GM10248 (cell line): ENCODE measurements at regions of chr7 and their contacts with region 1.

Region 1: DNA sequence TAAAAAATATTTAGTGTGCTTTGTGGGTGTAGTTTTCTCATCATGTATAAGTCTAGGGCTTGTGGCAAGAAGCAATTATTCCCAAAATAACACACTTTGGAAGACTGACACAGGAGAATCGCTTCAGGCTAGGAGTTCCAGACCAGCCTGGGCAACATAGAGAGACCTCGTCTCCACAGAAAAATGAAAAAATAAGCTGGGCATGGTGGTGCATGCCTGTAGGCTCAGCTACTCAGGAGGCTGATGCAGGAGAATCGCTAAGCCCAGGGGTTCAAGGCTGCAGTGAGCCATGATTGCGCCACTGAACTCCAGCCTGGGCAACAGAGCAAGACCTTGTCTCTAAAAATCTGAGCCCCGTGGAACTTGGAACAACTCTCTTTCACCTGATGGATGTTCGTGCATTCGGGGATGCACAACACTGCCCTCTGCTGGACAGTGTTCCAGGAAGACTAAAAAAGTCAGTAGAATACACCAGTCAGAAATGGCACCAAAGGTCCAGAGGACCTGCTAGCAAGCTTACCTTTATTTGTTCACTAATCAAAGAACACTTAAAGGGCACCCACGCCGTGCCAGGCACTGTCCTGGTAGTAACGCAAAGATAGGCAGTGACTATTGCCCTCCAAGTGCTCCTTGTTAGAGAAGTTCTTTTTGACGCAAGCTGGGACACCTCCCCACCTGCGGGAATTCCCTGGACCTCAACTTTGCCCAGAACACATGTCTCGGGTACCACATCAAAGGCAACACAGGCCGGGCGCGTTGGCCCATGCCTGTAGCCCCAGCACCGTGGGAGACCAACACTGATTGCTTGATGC is 81.9 kb upstream of the CALN1 start:
- DNase-seq: peak; percentile 66
- CTCF ChIP-seq: peak; percentile 77

Region 2: DNA sequence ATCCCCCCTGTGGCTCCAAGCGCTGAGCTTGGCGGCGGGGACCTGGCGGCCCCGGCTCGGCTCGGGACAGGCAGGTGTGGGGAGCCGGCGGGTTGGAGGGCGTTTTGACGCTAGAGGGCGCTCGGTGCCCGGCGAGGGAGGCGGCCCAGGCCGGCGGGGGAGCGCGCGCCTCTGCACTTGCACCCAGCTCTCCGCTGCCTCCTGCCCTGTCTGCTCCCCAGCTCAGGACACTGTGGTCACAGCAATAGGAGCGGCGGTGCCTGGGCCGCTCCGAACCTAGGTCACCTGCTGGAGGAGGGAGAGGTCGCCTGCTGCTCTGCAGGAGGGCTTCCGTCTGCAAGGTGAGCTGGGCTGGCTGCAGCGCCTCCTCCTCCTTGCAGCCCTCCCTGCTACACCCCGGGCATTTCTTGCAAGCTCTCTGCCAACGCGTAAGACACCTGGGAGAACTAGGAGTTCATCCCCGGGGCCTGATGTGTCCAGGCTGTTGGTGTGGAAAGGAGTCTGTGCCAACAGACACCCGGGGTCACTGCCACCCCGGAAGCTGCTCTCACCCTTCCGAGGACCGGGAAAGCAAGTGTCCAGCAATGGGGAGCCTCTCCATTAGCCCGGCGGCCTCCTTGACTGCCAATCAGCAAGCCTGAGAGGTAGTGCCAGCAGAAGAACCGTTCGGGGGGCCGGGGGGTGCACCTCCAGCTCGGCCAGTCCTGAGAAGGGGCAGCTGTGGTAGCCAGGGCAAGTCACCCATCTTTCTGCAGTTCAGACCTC is 741.7 kb before region 1 on chr7:
- CTCF ChIA-PET with region 1: interaction called, 14 read pairs
- POLR2A ChIA-PET with region 1: no interaction called
- DNase-seq: peak; percentile 61
- CTCF ChIP-seq: peak; percentile 72

Region 3: DNA sequence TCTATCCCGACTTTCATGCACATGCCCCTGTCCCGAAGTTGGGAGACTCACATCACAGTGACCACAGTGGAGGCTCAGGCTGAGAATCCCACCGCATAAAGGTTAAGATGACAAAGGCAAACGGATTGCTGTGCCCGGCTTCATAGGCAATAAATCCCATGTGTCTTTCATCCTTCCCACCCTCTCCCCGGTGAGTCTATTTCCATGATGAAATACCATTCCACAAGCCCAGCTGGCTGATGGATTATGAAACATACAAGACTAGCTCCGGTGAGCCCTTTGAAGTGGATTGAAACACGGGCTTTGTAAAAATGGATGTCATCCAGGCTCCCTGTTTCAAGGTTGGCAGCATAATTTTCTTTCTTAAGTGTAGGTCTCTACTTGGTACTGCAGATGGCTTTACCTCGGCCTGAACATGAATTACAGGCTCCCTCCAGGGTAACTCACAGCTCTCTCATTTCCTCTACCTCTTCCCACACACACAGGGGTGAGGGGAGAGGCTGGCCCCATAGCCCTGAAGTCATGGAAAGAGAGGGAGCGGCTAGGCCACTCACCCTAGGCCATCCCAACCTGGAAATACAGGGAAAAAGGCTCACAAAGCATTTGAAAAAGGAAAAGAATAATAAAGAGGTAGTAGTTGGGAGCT is 10.1 kb after region 1 on chr7:
- CTCF ChIA-PET with region 1: interaction called, 22 read pairs
- POLR2A ChIA-PET with region 1: no interaction called
- DNase-seq: no peak
- CTCF ChIP-seq: no peak